ENCODE measurements at regions of chr12 and their contacts with region 1.

Region 1: GRCh38 chr12:6285063-6285477 is 25.4 kb upstream of the PLEKHG6 start:
- DNase-seq: peak in 4 of 5 donors; percentile 51 to 64 (median 55)
- H3K4me3 ChIP-seq: no peak overlapping the region
- H3K4me3 Mint-ChIP-seq: no peak overlapping the region
- H3K27ac ChIP-seq: no peak overlapping the region
- H3K27ac Mint-ChIP-seq: peak overlapping the region in 1 of 7 donors; percentile 31
- H3K4me1 ChIP-seq: peaks cover 4% of the 10 kb centered on the region
- H3K4me1 Mint-ChIP-seq: peaks cover 0 to 9% (median 4%) of the 10 kb centered on the region in 4 donors
- H3K27me3 ChIP-seq: no peaks in the 10 kb centered on the region
- H3K27me3 Mint-ChIP-seq: peaks cover 8 to 23% of the 10 kb centered on the region in 2 donors

Region 2: GRCh38 chr12:6062757-6063735 is 222.0 kb before region 1 on chr12:
- CTCF ChIA-PET with region 1: interaction called, 3 read pairs
- POLR2A ChIA-PET with region 1: no interaction called
- intact Hi-C with region 1: loop called (anchors 1 kb)
- DNase-seq: peak in 4 of 5 donors; percentile 35 to 54 (median 40)
- H3K4me3 ChIP-seq: no peak overlapping the region
- H3K4me3 Mint-ChIP-seq: no peak overlapping the region
- H3K27ac ChIP-seq: no peak overlapping the region
- H3K27ac Mint-ChIP-seq: peak overlapping the region in 2 of 7 donors; percentile 19 to 60
- H3K4me1 ChIP-seq: no peaks in the 10 kb centered on the region
- H3K4me1 Mint-ChIP-seq: peaks cover 0 to 2% (median 0%) of the 10 kb centered on the region in 4 donors
- H3K27me3 ChIP-seq: no peaks in the 10 kb centered on the region
- H3K27me3 Mint-ChIP-seq: peaks cover 10% of the 10 kb centered on the region in 2 donors

Region 3: DNA sequence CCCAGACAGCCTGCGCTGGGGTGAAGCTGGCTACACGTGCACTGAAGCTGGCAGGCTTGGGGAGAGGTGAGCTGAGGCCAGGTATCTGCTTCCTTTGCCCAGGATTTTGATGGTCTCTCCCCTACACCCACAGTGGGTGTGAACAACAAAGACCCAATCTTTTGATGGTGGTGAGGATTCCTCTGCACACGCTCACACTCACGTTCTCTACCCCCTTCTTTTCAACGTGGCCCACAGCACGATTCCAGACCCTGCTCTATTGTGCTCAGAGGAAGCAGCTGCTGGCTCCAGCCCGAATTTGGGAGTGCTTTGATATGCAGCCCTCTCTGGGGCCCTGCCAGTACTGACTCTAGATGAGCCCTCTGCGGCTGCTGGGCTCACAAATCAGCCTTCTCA is 79.9 kb before region 1 on chr12:
- CTCF ChIA-PET with region 1: interaction called, 10 read pairs
- POLR2A ChIA-PET with region 1: no interaction called
- intact Hi-C with region 1: no loop called
- DNase-seq: no peak
- H3K4me3 ChIP-seq: no peak overlapping the region
- H3K4me3 Mint-ChIP-seq: no peak overlapping the region
- H3K27ac ChIP-seq: no peak overlapping the region
- H3K27ac Mint-ChIP-seq: no peak overlapping the region
- H3K4me1 ChIP-seq: peaks cover 7% of the 10 kb centered on the region
- H3K4me1 Mint-ChIP-seq: peaks cover 0 to 10% (median 1%) of the 10 kb centered on the region in 4 donors
- H3K27me3 ChIP-seq: peaks cover 11% of the 10 kb centered on the region
- H3K27me3 Mint-ChIP-seq: peaks cover 30 to 35% of the 10 kb centered on the region in 2 donors

Region 4: DNA sequence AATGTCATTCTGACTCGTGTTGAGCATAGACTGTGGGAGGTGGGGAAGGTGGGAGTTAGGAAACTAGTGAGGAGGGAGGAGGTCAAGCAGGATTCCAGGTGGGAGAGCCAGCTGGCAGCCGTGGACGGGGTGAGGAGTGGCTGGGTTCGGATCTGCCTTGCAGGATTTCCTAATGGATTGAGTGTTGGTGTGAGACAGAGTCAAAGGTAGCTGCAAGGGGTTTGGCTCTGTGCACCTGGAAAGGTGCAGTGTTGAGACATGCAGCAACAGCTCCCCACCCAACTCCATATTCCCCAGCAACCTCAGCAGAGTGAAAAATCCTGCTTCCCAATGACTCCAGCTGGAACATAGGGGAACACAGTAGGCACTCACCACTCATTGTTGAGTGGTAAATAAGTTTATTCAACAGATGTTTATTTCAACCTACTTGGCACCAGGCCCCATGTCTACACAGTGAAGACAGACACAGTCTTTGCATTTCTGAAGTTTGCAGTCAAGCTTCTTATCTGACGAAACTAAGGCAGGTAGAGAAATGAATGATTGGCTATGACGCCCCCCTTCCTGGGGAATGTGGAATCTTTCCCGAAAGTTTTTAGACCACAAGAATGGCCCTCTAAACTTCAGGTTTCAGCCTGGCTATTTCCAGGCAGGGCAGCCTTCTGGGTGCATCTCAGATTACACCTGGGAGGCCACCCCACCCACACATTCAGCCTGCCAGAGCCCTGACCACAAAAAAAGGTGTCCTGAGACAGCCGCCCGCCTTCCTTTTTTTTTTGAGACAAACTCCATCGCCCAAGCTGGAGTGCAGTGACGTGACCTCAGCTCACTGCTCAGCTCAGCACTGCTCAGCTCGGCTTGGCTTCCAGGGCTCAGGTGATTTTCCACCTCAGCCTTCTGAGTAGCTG is 12.5 kb before region 1 on chr12:
- CTCF ChIA-PET with region 1: interaction called, 16 read pairs
- POLR2A ChIA-PET with region 1: no interaction called
- intact Hi-C with region 1: no loop called
- DNase-seq: no peak
- H3K4me3 ChIP-seq: no peak overlapping the region
- H3K4me3 Mint-ChIP-seq: no peak overlapping the region
- H3K27ac ChIP-seq: no peak overlapping the region
- H3K27ac Mint-ChIP-seq: peak overlapping the region in 1 of 7 donors; percentile 8
- H3K4me1 ChIP-seq: no peaks in the 10 kb centered on the region
- H3K4me1 Mint-ChIP-seq: peaks cover 0 to 3% (median 0%) of the 10 kb centered on the region in 4 donors
- H3K27me3 ChIP-seq: no peaks in the 10 kb centered on the region
- H3K27me3 Mint-ChIP-seq: peaks cover 8 to 18% of the 10 kb centered on the region in 2 donors

Region 5: DNA sequence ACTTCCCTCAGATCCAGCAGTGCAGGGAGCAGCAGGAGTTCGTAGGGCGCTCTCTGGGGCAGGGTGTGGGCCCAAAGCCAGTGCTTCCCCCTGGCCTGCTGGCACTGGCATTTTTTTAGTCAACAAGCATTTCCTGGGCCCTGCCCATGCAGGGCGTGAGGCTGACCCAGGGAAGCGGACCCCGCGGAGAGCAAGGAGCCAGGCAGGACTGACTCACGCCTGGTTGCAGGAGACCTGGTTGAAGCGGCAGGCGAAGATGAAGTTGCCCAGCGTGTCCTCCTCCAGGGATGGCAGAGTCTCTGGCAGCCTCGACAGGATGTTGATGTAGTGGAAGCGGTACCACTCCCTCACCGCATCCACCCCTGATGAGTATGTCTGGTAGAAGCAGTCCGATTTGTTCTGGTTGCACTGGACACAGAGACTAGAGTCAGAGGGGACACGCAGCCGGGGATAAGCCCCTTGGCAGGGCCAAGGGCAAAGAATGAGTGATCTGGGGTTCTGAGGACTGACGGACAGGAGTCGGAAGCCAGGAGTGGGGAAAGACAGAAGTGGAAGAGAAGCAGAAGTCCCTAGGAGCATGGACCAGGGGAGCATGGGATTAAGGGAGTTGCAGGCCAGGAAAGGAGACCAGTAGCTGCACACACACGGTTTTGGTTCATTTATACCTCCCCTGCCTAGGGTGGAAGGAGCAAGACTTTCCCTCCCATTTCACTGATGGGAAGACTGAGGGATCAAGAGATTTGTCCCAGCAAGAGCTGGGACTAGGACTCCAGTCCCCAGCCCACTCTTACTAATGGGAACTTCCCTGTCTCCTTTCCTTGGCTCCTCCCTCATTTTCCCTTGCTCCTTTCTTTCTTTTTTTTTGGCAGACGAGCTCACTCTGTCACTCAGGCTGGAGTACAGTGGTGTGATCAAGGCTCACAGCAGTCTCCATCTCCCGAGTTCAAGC is 77.0 kb after region 1 on chr12:
- CTCF ChIA-PET with region 1: no interaction called
- POLR2A ChIA-PET with region 1: no interaction called
- intact Hi-C with region 1: no loop called
- DNase-seq: peak in 1 of 5 donors; percentile 24
- H3K4me3 ChIP-seq: no peak overlapping the region
- H3K4me3 Mint-ChIP-seq: peak overlapping the region in 7 of 8 donors; percentile 11 to 81 (median 70)
- H3K27ac ChIP-seq: no peak overlapping the region
- H3K27ac Mint-ChIP-seq: peak overlapping the region; percentile 8 to 97 (median 90)
- H3K4me1 ChIP-seq: peaks cover 19% of the 10 kb centered on the region
- H3K4me1 Mint-ChIP-seq: peaks cover 6 to 32% (median 16%) of the 10 kb centered on the region in 4 donors
- H3K27me3 ChIP-seq: no peaks in the 10 kb centered on the region
- H3K27me3 Mint-ChIP-seq: no peaks in the 10 kb centered on the region